CD8-positive, alpha-beta T cell (primary cell): ENCODE measurements at regions of chr1 and their contacts with region 1.

Region 1: GRCh38 chr1:204806943-204807687 is 63.5 kb upstream of the NFASC start:
- DNase-seq: peak; percentile 69 to 90 (median 83)
- ATAC-seq: peak; percentile 96
- H3K4me3 ChIP-seq: peak overlapping the region; percentile 53 to 59
- H3K4me3 Mint-ChIP-seq: peak overlapping the region; percentile 88
- H3K27ac ChIP-seq: no peak overlapping the region
- H3K27ac Mint-ChIP-seq: no peak overlapping the region
- H3K4me1 ChIP-seq: peaks cover 12% of the 10 kb centered on the region
- H3K4me1 Mint-ChIP-seq: peaks cover 20% of the 10 kb centered on the region
- H3K27me3 ChIP-seq: no peaks in the 10 kb centered on the region
- H3K27me3 Mint-ChIP-seq: no peaks in the 10 kb centered on the region
- CTCF ChIP-seq: peak; percentile 100

Region 2: GRCh38 chr1:203026031-203026989 is 1780.8 kb before region 1 on chr1 and contains the start of gene PPFIA4:
- CTCF ChIA-PET with region 1: no interaction called
- POLR2A ChIA-PET with region 1: no interaction called
- intact Hi-C with region 1: loop called in 1 of 2 experiments (anchors 10 kb)
- DNase-seq: peak; percentile 77 to 93 (median 86)
- ATAC-seq: peak; percentile 94
- H3K4me3 ChIP-seq: peak within 1 kb of the TSS; percentile 79 to 98
- H3K4me3 Mint-ChIP-seq: peak within 1 kb of the TSS; percentile 79
- H3K27ac ChIP-seq: peak within 1 kb of the TSS; percentile 46 to 69
- H3K27ac Mint-ChIP-seq: peak within 1 kb of the TSS; percentile 56
- H3K4me1 ChIP-seq: peaks cover 11% of the 10 kb centered on the region
- H3K4me1 Mint-ChIP-seq: peaks cover 8% of the 10 kb centered on the region
- H3K27me3 ChIP-seq: peaks cover 0 to 2% of the 10 kb centered on the region in 2 experiments
- H3K27me3 Mint-ChIP-seq: no peaks in the 10 kb centered on the region
- CTCF ChIP-seq: no peak
- total RNA-seq, gene PPFIA4: 0.33 to 1.1 TPM

Region 3: GRCh38 chr1:204065174-204065985 is 741.7 kb before region 1 on chr1:
- CTCF ChIA-PET with region 1: no interaction called
- POLR2A ChIA-PET with region 1: no interaction called
- intact Hi-C with region 1: no loop called
- DNase-seq: peak in 2 of 9 experiments; percentile 19 to 27
- ATAC-seq: no peak
- H3K4me3 ChIP-seq: no peak overlapping the region
- H3K4me3 Mint-ChIP-seq: no peak overlapping the region
- H3K27ac ChIP-seq: no peak overlapping the region
- H3K27ac Mint-ChIP-seq: no peak overlapping the region
- H3K4me1 ChIP-seq: no peaks in the 10 kb centered on the region
- H3K4me1 Mint-ChIP-seq: peaks cover 6% of the 10 kb centered on the region
- H3K27me3 ChIP-seq: no peaks in the 10 kb centered on the region
- H3K27me3 Mint-ChIP-seq: peaks cover 12% of the 10 kb centered on the region
- CTCF ChIP-seq: no peak

Region 4: DNA sequence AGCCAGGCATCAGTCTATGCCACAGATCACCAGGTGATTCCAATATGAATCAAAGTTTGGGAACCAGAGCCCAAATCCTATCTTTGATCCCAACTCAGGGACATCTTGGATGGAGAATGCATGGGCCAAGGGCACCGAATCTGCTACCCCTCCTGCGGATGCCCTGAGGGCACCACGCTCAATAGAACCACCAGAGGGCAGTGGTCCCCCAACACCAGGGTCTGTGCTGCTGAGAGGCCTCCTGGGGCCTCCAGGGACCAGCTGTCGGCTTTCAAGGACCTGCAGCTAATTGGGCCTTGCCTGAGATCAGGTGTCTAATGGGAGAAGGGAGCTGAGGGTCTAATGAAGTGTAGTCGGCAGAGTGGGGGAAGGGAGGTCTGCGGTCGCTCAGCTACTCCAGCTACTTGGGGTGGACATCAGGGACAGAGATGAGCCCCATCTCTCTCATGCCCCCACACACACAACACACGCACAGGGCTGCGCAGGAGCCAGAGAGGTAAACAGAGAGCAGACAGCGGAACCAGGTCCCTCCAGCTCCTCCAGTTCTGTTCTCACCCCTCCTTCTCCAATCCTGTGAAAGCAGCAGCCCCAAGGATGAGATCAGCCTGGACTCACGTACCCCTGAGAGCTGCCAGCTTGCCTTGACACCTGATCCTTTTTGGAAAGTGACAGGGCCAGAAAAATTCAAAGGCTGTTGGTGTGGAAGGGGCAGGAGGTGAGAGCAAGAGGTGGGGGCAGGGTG is 360.6 kb before region 1 on chr1:
- CTCF ChIA-PET with region 1: interaction called, 10 read pairs
- POLR2A ChIA-PET with region 1: no interaction called
- intact Hi-C with region 1: loop called (anchors 1 to 5 kb)
- DNase-seq: peak; percentile 58 to 86 (median 81)
- ATAC-seq: peak; percentile 98
- H3K4me3 ChIP-seq: no peak overlapping the region
- H3K4me3 Mint-ChIP-seq: no peak overlapping the region
- H3K27ac ChIP-seq: no peak overlapping the region
- H3K27ac Mint-ChIP-seq: peak overlapping the region; percentile 78
- H3K4me1 ChIP-seq: peaks cover 11% of the 10 kb centered on the region
- H3K4me1 Mint-ChIP-seq: peaks cover 8% of the 10 kb centered on the region
- H3K27me3 ChIP-seq: no peaks in the 10 kb centered on the region
- H3K27me3 Mint-ChIP-seq: no peaks in the 10 kb centered on the region
- CTCF ChIP-seq: peak; percentile 65

Region 5: DNA sequence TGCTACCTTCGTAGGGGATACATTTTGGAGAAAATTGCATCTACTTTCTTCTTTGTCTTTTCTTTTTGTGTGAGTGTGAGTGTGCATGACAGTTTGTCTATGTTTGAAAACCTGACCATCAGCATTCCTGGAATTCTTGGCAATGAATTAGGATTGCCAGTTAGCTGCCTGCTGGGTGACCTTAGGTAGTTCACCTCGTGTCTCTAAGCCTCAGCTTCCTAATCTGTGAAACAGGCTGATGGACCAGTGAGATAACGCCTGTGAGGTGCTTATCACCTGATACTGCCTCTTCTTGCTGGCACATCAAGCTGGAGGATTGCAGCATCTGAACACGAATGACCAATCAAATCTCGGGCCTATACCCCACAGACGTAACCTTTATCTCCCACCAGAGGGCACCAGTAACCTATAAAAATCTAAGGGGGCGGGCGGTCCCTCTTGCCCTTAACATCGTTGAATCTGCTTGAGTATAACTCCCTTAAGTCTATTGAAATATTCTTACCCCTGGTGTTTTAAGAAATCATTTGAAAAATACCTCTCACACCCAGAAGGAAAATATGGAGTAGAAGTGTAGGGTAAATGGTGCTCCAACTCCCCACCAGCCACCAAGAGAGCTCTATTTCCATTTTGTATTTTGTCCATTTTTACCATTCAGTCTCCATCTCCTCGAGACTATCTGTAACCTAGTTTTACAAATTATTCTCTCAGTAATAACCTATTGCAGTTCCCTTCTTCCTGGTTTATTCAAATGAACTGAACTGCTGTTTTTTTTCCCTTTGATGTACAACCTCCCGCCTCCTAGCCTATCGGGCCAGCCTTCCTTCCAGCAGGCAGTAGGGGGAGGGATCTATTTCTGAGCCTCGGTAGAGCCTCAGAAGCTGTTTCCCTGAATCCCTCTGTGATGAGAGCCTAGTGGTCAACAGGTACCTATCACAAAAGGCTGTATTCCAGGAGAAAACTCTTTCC is 241.2 kb before region 1 on chr1:
- CTCF ChIA-PET with region 1: interaction called, 30 read pairs
- POLR2A ChIA-PET with region 1: interaction called, 3 read pairs
- intact Hi-C with region 1: loop called (anchors 1 kb)
- DNase-seq: peak; percentile 25 to 84 (median 55)
- ATAC-seq: peak; percentile 93
- H3K4me3 ChIP-seq: no peak overlapping the region
- H3K4me3 Mint-ChIP-seq: no peak overlapping the region
- H3K27ac ChIP-seq: peak overlapping the region in 1 of 2 experiments; percentile 9
- H3K27ac Mint-ChIP-seq: peak overlapping the region; percentile 10
- H3K4me1 ChIP-seq: peaks cover 35% of the 10 kb centered on the region
- H3K4me1 Mint-ChIP-seq: peaks cover 52% of the 10 kb centered on the region
- H3K27me3 ChIP-seq: no peaks in the 10 kb centered on the region
- H3K27me3 Mint-ChIP-seq: no peaks in the 10 kb centered on the region
- CTCF ChIP-seq: peak; percentile 70

Region 6: DNA sequence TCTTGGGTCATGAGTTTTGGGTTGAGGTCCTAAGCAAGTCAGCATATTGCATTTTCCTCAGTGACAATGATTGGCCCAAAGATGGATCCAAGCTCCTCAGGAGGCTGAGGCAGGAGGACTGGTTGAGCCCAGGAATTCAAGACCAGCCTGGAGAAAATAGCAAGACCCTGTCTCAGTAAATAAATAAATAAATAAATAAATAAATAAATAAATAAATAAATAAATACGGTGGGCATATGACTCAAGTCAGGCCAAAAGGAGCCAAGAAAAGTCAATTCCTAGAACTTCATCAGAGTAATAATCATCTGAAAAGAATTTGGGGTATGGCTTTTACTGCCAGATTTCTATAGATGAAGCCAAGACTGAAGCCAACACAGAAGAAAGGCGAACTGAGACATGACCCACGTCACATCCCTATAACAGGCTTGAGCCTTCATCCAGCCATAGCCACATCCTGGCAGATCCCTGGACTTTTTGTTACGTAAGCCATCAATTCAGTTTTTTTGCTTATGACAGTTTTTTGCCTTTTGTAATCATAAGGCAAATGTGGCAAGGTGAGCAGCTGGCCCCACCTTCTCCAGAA is 24.9 kb before region 1 on chr1:
- CTCF ChIA-PET with region 1: interaction called, 135 read pairs
- POLR2A ChIA-PET with region 1: no interaction called
- intact Hi-C with region 1: no loop called
- DNase-seq: no peak
- ATAC-seq: no peak
- H3K4me3 ChIP-seq: no peak overlapping the region
- H3K4me3 Mint-ChIP-seq: no peak overlapping the region
- H3K27ac ChIP-seq: no peak overlapping the region
- H3K27ac Mint-ChIP-seq: no peak overlapping the region
- H3K4me1 ChIP-seq: no peaks in the 10 kb centered on the region
- H3K4me1 Mint-ChIP-seq: no peaks in the 10 kb centered on the region
- H3K27me3 ChIP-seq: no peaks in the 10 kb centered on the region
- H3K27me3 Mint-ChIP-seq: peaks cover 14% of the 10 kb centered on the region
- CTCF ChIP-seq: no peak

Region 7: GRCh38 chr1:204830747-204831146 is 23.6 kb after region 1 on chr1:
- CTCF ChIA-PET with region 1: interaction called, 26 read pairs
- POLR2A ChIA-PET with region 1: no interaction called
- intact Hi-C with region 1: no loop called
- DNase-seq: no peak
- ATAC-seq: no peak
- H3K4me3 ChIP-seq: no peak overlapping the region
- H3K4me3 Mint-ChIP-seq: no peak overlapping the region
- H3K27ac ChIP-seq: no peak overlapping the region
- H3K27ac Mint-ChIP-seq: no peak overlapping the region
- H3K4me1 ChIP-seq: no peaks in the 10 kb centered on the region
- H3K4me1 Mint-ChIP-seq: peaks cover 6% of the 10 kb centered on the region
- H3K27me3 ChIP-seq: peaks cover 3 to 7% of the 10 kb centered on the region in 2 experiments
- H3K27me3 Mint-ChIP-seq: peaks cover 48% of the 10 kb centered on the region
- CTCF ChIP-seq: no peak

Region 8: GRCh38 chr1:204915861-204916495 is 108.9 kb after region 1 on chr1:
- CTCF ChIA-PET with region 1: no interaction called
- POLR2A ChIA-PET with region 1: no interaction called
- intact Hi-C with region 1: no loop called
- DNase-seq: no peak
- ATAC-seq: no peak
- H3K4me3 ChIP-seq: no peak overlapping the region
- H3K4me3 Mint-ChIP-seq: no peak overlapping the region
- H3K27ac ChIP-seq: no peak overlapping the region
- H3K27ac Mint-ChIP-seq: no peak overlapping the region
- H3K4me1 ChIP-seq: no peaks in the 10 kb centered on the region
- H3K4me1 Mint-ChIP-seq: no peaks in the 10 kb centered on the region
- H3K27me3 ChIP-seq: no peaks in the 10 kb centered on the region
- H3K27me3 Mint-ChIP-seq: peaks cover 22% of the 10 kb centered on the region
- CTCF ChIP-seq: no peak